ENCODE measurements at regions of chr16 and their contacts with region 1.

Region 1: DNA sequence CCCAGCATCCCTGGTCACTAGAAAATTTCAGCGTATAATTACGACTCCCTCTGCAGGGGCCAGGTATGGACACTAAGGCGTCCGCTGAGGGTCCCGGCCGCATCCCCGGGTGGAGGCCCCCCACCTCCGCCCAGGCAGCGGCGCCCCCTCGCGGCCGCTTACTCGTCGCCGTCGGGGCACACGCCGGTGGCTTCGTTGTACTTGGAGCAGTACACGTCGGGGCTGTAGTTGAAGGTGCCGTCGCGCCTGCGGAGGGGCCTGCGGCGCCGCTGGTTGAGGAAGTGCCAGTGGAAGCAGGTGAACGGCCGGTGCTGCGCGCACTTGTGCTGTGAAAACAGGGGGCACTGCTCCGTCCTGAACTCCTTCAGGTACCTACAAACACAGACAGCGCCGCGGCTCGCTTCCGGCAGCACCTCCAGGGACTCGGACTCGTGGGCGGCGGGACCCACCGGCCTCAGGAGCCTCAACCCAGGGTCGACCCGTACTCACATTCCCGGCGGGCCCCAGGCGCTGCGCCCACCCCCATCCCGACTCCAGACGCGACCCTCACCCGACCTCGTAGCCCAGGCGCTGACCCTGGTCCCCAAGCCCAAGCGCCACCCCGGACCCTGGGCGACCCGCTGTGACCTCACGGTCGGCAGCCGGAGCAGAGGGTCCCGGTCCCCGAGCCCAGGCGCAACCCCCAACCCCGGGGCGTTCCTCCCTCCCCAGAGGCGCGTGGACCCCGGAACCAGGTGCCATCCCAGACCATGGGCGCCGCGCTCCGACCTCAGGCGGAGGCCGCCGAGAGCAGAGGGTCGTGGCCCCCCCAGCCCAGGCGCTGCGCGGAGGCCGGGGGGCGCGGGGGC is 596 bp downstream of the UNKL start:
- DNase-seq: peak in 1 of 2 donors; percentile 27
- ATAC-seq: peak; percentile 31 to 47
- H3K4me3 ChIP-seq: peak overlapping the region; percentile 92 to 97 (median 94)
- H3K27ac ChIP-seq: peak overlapping the region; percentile 84 to 90 (median 86)
- H3K4me1 ChIP-seq: peaks cover 15 to 28% of the 10 kb centered on the region in 2 donors
- H3K27me3 ChIP-seq: no peaks in the 10 kb centered on the region
- CTCF ChIP-seq: peak; percentile 25 to 69 (median 60)
- POLR2A ChIP-seq: no peak

Region 2: DNA sequence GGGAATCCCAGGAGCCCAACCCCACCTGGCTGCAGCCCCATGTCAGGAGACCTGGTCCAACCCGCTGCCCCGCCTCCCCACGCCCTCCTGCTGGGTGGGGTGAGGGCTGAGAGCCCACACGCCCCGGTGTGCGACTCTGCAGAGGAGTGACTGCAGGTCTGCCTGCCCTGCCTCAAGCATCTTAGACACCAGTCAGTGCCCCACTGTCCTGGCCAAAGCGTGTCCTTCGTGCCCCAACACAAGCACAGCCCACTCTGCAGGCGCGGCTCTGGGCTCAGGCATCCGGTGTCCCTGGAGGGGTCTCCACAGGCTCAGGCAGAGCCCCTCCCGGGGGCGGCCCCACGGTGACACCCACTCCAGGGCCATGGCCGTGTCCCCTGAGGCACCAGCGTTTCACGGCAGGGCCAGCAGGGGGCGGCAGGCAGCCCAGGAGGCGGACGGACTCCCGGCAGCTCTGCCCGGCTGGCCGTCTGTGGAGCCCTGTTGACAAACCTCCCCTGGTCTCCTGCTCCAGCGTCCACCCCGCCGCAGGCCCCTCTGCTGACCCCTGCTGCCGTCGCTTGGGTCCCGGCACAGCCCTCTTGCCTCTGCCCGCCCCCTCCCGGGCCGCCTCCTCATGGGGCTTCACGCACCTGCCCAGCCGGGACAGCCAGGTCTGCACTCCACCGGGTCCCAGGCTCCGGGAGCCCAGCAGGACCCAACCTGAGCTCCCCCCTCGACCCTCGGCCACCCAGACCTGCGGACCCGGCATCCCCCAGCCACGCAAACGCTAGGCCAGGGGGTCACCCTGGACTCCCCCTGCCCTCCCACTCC is 113.0 kb before region 1 on chr16:
- in situ Hi-C with region 1: no loop called
- intact Hi-C with region 1: no loop called
- DNase-seq: peak; percentile 17 to 44
- ATAC-seq: peak in 1 of 2 donors; percentile 43
- H3K4me3 ChIP-seq: no peak overlapping the region
- H3K27ac ChIP-seq: no peak overlapping the region
- H3K4me1 ChIP-seq: peaks cover 10 to 15% of the 10 kb centered on the region in 2 donors
- H3K27me3 ChIP-seq: peaks cover 40 to 46% (median 43%) of the 10 kb centered on the region in 3 donors
- CTCF ChIP-seq: peak; percentile 63 to 86 (median 76)
- POLR2A ChIP-seq: no peak

Region 3: DNA sequence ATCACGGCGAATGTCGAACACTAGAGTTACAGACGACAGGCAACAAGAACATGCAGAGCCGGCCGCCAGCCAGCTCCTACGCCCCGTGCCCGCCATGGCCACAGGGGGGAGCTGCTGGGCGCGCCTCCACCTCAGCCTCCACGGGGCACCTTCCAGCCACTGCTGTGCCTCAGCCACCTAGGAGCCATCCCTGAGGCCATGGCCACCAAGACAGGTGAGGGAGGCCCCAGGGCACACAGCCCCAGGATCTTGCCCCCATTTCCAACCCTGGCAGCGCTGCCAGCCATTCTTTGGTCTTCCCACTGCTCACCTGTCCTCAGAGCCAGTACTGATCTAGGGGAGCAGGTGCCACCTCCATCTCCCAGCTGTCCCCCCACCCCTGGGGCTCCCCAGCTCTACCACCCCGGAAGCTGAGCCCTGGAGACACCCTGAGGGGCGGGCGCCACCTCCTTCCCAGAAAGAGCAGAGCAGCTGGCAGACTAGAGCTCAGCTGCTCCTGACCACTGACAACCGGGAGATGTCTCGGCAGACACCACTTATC is 50.3 kb before region 1 on chr16:
- in situ Hi-C with region 1: loop called in 1 of 4 experiments (anchors 10 kb)
- intact Hi-C with region 1: loop called (anchors 1 kb)
- DNase-seq: peak; percentile 25 to 68
- ATAC-seq: peak; percentile 65 to 86
- H3K4me3 ChIP-seq: no peak overlapping the region
- H3K27ac ChIP-seq: peak overlapping the region in 3 of 4 donors; percentile 3 to 55 (median 25)
- H3K4me1 ChIP-seq: no peaks in the 10 kb centered on the region
- H3K27me3 ChIP-seq: no peaks in the 10 kb centered on the region
- CTCF ChIP-seq: peak; percentile 66 to 84 (median 82)
- POLR2A ChIP-seq: no peak